Activated CD4-positive, alpha-beta T cell treated with anti-CD3 and anti-CD28 coated beads, Interleukin-2, amount 10 ng/mL, durations not matched to agents 24 days and 14 days (primary cell): ENCODE measurements at regions of chr4 and their contacts with region 1.

Region 1: DNA sequence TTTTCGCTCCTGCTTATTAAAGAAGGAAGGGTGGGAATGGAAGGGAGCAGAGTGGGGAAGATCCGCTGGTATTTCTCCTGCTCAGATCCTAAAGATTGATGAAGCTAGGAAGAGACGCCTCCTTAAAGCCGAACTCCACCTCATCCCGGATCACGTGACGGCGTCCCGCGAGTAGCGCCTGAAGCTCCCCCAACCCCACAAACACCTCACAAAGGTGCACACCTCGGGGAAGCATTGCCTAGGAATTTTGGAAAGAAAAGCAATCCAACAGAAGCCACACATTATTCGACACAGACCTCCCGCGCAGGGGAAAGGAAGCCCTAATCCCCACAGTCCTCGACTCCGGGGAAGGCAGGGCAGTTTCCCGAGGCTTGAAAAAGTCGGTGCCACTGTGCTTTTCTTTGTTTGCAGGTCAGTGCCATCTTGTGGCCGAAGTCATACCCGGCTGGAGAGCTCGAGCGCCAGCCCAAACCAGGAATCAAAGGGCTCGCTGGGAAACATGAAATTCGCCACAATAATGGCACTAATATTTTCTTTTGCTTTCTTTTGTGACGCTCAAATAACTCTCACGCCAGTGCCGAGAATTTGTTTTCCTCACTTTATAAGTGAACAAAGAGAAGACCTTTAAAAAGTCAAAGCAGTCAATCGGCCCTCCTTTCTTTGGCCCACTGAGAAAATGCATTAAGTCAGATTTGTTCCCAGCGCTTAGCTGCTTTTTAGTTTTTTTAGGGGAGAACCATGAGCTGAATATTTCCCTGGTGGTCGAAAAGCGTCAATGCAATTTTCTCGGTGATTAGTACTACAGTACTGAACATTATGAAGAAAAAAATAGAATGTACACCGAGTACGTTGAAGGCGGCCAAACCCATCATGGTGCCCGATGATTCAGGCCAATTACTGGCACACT is at the start of gene NPY1R:
- DNase-seq: peak; percentile 77
- H3K4me3 Mint-ChIP-seq: peak within 1 kb of the TSS; percentile 72
- H3K27ac Mint-ChIP-seq: no peak within 1 kb of the TSS
- H3K4me1 Mint-ChIP-seq: peaks cover 12% of the 10 kb centered on the region
- H3K27me3 Mint-ChIP-seq: peaks cover 49% of the 10 kb centered on the region
- total RNA-seq, gene NPY1R: not detected in 2 replicates

Region 2: GRCh38 chr4:163048447-163048846 is 284.3 kb before region 1 on chr4:
- intact Hi-C with region 1: loop called (anchors 2 kb)
- DNase-seq: peak; percentile 62
- H3K4me3 Mint-ChIP-seq: no peak overlapping the region
- H3K27ac Mint-ChIP-seq: no peak overlapping the region
- H3K4me1 Mint-ChIP-seq: no peaks in the 10 kb centered on the region
- H3K27me3 Mint-ChIP-seq: no peaks in the 10 kb centered on the region

Region 3: DNA sequence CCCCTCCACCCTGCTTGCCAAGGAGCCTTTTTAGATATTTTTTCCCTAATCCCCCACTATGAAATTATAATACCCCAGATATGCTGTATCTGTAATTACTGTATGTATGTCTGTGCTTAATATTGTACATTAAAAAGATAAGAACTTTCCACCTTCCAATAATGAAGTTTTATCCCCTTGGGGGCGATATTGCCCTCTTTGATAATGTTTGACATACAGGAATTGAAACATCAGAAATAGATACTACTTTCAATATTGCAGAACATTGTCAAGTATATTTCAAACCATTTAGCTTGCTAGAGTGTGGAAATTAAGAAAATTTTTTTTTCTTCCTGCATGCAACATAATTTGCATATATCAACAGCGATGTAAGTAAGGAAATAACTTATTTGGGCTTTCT is 225.0 kb before region 1 on chr4:
- intact Hi-C with region 1: loop called (anchors 5 kb)
- DNase-seq: peak; percentile 76
- H3K4me3 Mint-ChIP-seq: no peak overlapping the region
- H3K27ac Mint-ChIP-seq: no peak overlapping the region
- H3K4me1 Mint-ChIP-seq: peaks cover 23% of the 10 kb centered on the region
- H3K27me3 Mint-ChIP-seq: no peaks in the 10 kb centered on the region

Region 4: GRCh38 chr4:163243297-163243981 is 89.3 kb before region 1 on chr4:
- intact Hi-C with region 1: no loop called
- DNase-seq: no peak
- H3K4me3 Mint-ChIP-seq: no peak overlapping the region
- H3K27ac Mint-ChIP-seq: no peak overlapping the region
- H3K4me1 Mint-ChIP-seq: no peaks in the 10 kb centered on the region
- H3K27me3 Mint-ChIP-seq: no peaks in the 10 kb centered on the region

Region 5: DNA sequence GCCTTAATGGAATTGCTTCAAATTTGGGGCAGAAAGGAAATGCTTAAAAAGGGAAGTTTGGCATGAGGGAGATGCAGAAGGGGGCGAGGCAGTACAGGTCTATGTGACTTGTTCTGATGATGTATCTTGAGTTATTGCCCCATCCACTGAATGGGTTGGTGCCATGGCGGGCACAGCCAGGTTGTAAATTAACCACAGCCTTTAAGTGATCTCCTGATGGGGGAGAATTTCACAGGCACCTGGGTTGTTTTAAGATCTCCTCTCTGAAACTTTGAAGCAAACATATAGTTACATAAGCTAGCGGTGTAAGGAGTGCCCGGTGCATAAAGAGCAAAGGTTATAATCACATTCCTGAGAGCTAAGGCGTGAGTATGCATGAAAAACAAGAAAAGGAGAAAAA is 48.0 kb after region 1 on chr4:
- intact Hi-C with region 1: no loop called
- DNase-seq: no peak
- H3K4me3 Mint-ChIP-seq: no peak overlapping the region
- H3K27ac Mint-ChIP-seq: no peak overlapping the region
- H3K4me1 Mint-ChIP-seq: no peaks in the 10 kb centered on the region
- H3K27me3 Mint-ChIP-seq: no peaks in the 10 kb centered on the region